ENCODE measurements at regions of chr15 and their contacts with region 1.

Region 1: DNA sequence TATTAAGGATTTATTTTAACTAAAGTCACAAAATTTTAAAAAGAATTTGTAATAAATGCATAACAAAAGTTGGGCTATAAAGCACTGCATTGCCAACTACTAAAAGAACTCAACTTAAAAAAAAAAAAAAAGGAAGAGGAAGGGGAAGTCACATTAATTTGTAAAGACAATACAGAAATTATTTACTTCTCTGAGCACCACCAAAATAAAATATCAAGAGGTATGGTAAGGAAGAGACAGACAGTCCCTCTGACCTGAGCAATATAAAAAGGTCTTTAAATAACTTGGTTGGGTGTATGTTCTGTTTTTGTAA is 83.5 kb downstream of the UACA start:
- DNase-seq: no peak
- H3K4me3 ChIP-seq: no peak overlapping the region
- H3K27ac ChIP-seq: no peak overlapping the region
- H3K4me1 ChIP-seq: no peaks in the 10 kb centered on the region
- H3K27me3 ChIP-seq: no peaks in the 10 kb centered on the region
- CTCF ChIP-seq: 0 out of 2 replicates have a peak, but pooled peaks have one; percentile 1

Region 2: DNA sequence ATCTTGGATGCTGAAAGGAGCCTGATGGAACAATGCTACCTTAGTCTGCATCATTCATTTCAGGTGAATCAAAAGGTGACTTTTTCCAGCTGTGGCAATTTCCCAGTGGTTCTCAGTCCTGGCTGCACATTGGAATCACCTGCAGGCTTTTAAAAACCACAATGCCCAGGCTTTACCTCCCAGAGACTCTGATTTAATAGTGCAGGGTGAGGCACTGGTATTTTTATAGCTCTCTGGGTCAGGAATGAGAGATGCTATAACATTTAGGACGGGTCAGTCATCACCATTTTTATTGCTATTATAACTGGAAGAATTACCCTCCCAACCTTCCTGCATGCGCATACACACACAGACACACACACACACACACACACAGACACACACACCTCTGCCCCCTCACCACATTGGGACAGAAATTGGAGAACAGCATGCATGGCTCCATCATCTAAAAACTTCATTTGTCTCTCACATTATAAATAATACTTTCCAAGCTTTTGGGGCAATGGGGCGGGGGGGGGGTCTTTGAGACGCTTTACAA is 133.0 kb after region 1 on chr15:
- CTCF ChIA-PET with region 1: interaction called, 6 read pairs
- POLR2A ChIA-PET with region 1: no interaction called
- intact Hi-C with region 1: loop called (anchors 1 kb)
- DNase-seq: no peak
- H3K4me3 ChIP-seq: no peak overlapping the region
- H3K27ac ChIP-seq: no peak overlapping the region
- H3K4me1 ChIP-seq: no peaks in the 10 kb centered on the region
- H3K27me3 ChIP-seq: no peaks in the 10 kb centered on the region
- CTCF ChIP-seq: no peak

Region 3: DNA sequence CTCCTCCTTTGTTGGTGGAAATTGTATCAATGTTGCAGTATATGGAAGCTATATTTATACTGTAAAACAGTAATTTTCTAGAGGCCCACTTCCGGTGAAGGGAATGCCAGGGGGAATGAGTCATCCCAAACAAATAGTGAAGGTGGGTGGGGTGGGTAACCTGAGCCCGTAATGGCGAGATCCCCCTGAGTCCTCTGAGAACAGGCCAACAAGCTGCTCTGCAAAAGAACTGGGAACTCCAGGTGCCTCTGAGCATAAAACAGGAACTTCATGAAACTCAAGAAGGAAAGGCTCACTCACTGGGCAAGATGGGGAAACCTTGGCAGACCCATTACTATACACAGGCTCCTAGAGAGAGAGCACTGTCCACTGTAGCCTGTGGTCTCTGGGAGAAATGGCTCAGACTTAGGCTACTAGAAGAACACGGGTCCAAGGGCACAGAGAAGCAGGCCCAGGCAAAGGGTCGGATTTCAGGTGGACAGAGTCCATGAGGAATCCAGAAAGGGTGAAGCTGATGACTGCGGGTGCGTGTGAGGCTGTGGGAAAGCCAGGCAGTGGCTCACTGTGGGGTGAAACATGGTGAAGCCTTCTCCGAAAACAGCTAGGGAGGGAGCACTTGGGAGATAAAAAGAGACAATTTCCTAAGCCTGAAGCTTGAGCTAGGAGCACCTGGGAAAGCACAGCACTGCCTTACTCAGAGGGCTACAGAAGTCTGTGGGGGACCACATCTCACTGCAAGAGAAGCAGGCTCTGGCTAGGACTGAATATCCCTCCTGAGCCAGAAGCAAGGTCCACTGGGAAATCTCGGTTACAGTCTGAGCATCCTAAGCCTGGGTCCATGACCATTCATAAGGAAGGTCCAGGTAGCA is 154.3 kb after region 1 on chr15:
- CTCF ChIA-PET with region 1: no interaction called
- POLR2A ChIA-PET with region 1: interaction called, 10 read pairs
- intact Hi-C with region 1: no loop called
- DNase-seq: peak; percentile 75 to 81
- H3K4me3 ChIP-seq: no peak overlapping the region
- H3K27ac ChIP-seq: peak overlapping the region; percentile 96
- H3K4me1 ChIP-seq: peaks cover 24% of the 10 kb centered on the region
- H3K27me3 ChIP-seq: no peaks in the 10 kb centered on the region
- CTCF ChIP-seq: no peak

Region 4: DNA sequence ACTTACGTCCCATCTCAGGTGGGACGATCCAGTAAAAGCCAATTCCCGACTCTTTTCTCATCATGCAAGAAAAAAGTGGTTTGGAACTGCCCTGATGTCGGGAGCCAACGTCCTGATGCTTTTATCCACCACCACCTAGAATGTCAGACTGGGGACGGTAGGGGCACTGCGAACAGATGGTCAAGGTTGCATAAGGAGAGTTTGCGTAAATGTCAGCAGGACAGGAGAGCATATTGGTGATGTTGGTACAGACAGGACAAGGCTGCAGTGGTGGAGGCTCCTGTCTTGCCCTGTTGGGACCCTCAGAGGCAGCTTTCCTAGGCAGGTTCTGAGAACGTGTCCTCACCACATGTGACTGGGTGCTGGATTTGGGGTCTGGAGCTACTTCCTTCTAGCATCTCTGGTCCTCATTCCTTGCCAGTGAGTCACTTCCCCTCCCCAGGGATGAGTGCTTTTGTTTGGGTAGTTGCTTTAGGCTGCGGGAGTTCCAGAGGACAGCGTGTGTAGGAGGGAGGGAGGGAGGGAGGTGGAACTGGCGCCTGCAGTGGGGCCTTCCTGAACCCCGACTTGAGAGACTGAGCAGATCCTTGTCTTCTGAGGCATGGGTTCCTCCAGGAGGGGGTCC is 456.4 kb after region 1 on chr15:
- CTCF ChIA-PET with region 1: no interaction called
- POLR2A ChIA-PET with region 1: no interaction called
- intact Hi-C with region 1: no loop called
- DNase-seq: peak; percentile 56 to 75
- H3K4me3 ChIP-seq: no peak overlapping the region
- H3K27ac ChIP-seq: no peak overlapping the region
- H3K4me1 ChIP-seq: peaks cover 29% of the 10 kb centered on the region
- H3K27me3 ChIP-seq: no peaks in the 10 kb centered on the region
- CTCF ChIP-seq: no peak

Measured in PC-9 (cell line).